AG04449 (cell line): ENCODE measurements at regions of chr17 and their contacts with region 1.

Region 1: GRCh38 chr17:2054512-2055291 is at the start of gene HIC1:
- DNase-seq: no peak
- H3K4me3 ChIP-seq: peak within 1 kb of the TSS; percentile 66
- CTCF ChIP-seq: peak; percentile 73

Region 2: DNA sequence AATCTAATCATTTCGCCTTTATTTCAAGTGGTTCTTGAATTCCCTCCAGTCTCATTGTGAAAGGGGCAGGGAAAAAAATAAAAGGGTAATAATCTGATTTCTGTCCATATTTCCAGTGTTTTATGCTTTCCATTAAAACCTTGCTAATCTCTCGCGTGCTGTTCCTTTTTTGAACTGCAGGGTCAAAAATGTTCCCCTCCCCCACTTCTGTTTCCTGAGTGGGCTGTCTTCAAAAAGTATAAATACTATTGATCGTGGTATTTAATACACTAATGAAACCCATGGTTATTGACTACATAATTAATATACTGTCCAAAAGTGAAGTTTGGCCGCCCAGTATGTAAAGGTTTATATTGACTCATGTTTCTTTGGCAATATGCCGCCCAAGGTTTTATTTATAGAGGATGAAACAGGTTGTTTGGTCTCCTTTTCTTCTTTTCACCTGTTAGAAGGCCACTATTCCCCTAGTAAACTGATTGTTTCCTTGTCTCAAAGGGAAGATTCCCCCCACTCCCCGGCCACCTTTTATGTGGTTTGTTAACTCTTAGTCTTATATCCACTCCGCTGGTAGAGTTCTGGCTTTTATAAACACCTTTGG is 155.2 kb before region 1 on chr17:
- CTCF ChIA-PET with region 1: no interaction called
- POLR2A ChIA-PET with region 1: no interaction called
- DNase-seq: no peak
- H3K4me3 ChIP-seq: no peak overlapping the region
- CTCF ChIP-seq: no peak

Region 3: GRCh38 chr17:2064980-2065785 is 10.5 kb after region 1 on chr17:
- CTCF ChIA-PET with region 1: interaction called, 86 read pairs
- POLR2A ChIA-PET with region 1: interaction called, 38 read pairs
- DNase-seq: no peak
- H3K4me3 ChIP-seq: no peak overlapping the region
- CTCF ChIP-seq: peak; percentile 63

Region 4: GRCh38 chr17:2087597-2088211 is 33.0 kb after region 1 on chr17:
- CTCF ChIA-PET with region 1: interaction called, 27 read pairs
- POLR2A ChIA-PET with region 1: interaction called, 28 read pairs
- DNase-seq: no peak
- H3K4me3 ChIP-seq: no peak overlapping the region
- CTCF ChIP-seq: no peak

Region 5: DNA sequence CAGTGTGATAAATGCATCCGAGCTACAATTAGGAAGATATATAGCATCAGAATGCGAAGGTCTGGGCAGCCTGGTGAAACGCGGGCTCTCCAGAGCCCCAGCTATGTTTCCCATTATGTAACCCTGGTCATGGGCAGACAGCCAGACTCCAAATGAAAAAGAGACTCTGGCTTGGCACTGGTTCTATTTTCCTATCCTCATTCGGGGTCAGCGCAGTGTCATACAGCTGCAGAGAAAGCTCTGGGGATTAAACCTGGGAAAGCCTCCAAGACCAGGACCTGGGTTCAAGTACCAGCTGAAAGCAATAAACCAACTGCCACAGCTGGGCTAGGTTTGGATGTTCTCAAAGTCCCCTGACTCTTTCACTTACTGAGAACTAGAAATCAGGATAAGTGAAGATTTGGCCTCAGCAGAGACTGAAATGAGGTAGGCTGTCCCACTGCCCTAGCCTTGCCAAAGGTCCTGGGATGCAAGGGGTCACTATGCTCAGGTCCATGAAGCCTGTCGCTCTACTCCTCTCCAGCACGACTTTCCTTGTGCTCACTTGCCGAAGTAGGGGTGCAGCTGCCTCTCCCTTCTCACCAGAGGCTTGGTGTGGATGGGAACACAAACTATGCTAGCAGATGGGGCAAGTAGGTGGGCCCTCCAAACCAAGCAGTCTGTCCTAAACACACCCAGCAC is 125.1 kb after region 1 on chr17:
- CTCF ChIA-PET with region 1: interaction called, 24 read pairs
- POLR2A ChIA-PET with region 1: interaction called, 8 read pairs
- DNase-seq: no peak
- H3K4me3 ChIP-seq: no peak overlapping the region
- CTCF ChIP-seq: no peak

Region 6: DNA sequence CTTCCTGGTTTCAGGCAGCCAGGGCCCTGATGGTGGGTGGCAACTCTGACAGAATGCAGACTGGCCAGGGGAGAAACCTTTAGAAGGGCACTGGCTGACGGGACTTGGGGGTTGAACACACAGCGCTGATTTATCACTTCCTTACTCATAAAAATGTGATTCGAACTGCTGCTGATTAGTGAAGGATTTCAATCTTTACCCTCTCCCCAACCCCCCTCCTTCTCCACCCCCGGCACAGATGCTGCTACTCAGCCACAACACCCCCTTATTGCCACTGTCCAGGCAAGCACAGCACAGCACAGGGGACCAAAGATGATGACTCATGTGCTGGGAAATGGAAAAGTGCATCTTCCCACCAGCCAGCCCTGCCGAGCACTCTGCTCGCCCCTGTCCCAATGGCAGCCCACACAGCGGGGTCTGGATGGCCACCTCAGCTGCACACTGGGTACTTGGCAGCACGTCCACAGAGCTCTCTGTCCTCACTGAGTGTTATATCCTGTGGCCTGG is 178.8 kb after region 1 on chr17:
- CTCF ChIA-PET with region 1: interaction called, 18 read pairs
- POLR2A ChIA-PET with region 1: interaction called, 6 read pairs
- DNase-seq: no peak
- H3K4me3 ChIP-seq: no peak overlapping the region
- CTCF ChIP-seq: no peak

Region 7: DNA sequence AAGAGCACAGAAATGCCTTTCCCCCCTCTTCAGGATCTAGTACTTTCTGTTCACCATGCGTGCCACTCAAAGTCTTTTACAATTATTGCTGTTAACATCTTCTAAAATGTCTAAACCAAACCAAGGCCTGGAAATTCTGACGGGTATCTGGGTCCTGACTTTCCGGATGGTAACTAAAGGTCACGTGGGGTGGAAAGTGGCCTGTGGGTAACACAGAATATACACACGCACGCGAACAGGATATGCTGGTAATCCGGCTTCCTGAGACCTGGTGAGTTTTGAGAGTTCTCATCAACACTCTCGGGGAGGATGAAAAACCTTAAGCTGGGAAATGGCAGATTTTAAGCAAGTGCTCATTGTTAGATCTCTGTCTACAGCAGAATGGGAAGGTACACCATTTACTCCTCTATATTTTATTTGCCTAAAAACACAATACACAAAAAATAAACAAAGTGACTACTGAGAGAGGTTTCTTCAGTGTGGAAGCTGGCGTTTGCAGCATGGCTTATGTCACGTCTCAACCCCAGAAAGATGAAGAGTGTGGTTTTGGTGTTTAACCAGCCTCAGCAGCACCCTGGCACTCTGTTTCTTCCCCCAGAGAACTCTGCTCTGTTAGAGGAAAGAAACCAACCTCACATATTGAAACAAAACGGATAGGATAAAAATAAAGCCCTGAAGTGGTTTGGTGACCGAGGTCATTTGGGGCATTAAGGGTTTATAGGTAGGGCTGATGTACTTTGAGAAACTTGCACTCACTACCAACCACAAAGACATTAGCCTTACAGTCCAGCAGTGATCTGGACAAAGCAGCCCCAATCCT is 211.6 kb after region 1 on chr17:
- CTCF ChIA-PET with region 1: interaction called, 68 read pairs
- POLR2A ChIA-PET with region 1: interaction called, 4 read pairs
- DNase-seq: no peak
- H3K4me3 ChIP-seq: no peak overlapping the region
- CTCF ChIP-seq: no peak

Region 8: DNA sequence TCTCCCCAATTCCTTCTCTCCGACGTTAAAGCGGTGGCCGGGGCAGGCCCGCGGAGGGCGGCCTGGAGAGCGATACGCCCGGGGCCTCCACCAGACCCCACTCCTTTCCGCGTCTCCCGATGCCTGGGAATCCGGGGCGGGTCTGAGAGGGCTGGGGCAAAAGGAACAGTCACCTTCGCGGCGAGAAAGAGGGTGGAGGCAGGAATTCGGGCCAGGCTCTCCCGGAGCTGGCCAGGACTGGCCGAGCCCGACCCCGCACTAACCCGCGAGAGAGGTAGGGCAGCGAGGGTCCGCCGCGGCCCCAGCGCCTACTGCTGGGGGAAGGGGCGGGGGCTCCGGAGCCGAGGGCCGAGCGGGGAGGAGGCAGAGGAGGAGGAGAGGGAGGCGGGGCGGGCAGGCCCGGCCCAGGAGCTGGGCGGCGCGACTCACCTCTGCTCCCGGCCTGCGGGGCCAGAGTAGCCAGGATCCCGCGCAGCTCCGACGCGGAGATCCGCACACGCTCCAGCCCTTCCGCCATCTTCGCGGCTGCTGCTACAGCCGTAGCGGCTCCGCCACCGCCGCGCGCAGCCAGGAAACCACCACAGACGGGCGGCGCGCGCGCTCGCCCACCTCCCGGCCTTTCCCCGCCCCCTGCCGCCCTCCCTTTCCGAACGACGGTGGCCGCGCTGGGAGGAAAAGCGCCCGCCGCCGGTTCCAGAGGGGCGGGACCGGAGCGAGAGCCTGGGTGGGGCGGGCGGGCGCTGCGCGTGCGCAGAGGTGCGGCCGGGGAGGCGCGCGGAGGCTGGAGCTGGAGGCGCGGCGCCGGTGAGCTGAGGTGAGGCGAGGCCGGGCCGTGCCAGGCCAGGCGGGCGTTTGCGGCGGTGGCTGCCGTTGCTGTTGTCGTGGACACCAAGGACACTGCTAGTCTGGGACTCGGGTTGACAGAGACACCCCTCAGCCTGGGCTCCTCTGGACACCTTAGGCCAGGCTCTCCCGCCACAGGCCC is 248.8 kb after region 1 on chr17 and contains the starts of genes SMG6 and SRR:
- CTCF ChIA-PET with region 1: interaction called, 3 read pairs
- POLR2A ChIA-PET with region 1: interaction called, 10 read pairs
- DNase-seq: no peak
- H3K4me3 ChIP-seq: peak within 1 kb of the TSS; percentile 86
- CTCF ChIP-seq: no peak